ENCODE measurements at regions of chr1 and their contacts with region 1.

Region 1: GRCh38 chr1:17201201-17202021 is 3.5 kb upstream of the PADI1 start:
- DNase-seq: no peak
- H3K4me3 ChIP-seq: no peak overlapping the region
- H3K27ac ChIP-seq: no peak overlapping the region
- H3K4me1 ChIP-seq: peaks cover 16% of the 10 kb centered on the region
- H3K27me3 ChIP-seq: no peaks in the 10 kb centered on the region
- CTCF ChIP-seq: no peak

Region 2: GRCh38 chr1:17370618-17371017 is 169.2 kb after region 1 on chr1:
- CTCF ChIA-PET with region 1: interaction called, 3 read pairs
- dilution Hi-C with region 1: loop called (anchors 5 kb)
- in situ Hi-C with region 1: no loop called
- intact Hi-C with region 1: no loop called
- DNase-seq: peak; percentile 32
- H3K4me3 ChIP-seq: no peak overlapping the region
- H3K27ac ChIP-seq: no peak overlapping the region
- H3K4me1 ChIP-seq: peaks cover 32% of the 10 kb centered on the region
- H3K27me3 ChIP-seq: no peaks in the 10 kb centered on the region
- CTCF ChIP-seq: peak; percentile 72